Activated naive CD4-positive, alpha-beta T cell treated with anti-CD3 and anti-CD28 coated beads, Interleukin-2, amount 10 ng/mL, durations not matched to agents 7 days and 5 days (primary cell): ENCODE measurements at regions of chr2 and their contacts with region 1.

Region 1: DNA sequence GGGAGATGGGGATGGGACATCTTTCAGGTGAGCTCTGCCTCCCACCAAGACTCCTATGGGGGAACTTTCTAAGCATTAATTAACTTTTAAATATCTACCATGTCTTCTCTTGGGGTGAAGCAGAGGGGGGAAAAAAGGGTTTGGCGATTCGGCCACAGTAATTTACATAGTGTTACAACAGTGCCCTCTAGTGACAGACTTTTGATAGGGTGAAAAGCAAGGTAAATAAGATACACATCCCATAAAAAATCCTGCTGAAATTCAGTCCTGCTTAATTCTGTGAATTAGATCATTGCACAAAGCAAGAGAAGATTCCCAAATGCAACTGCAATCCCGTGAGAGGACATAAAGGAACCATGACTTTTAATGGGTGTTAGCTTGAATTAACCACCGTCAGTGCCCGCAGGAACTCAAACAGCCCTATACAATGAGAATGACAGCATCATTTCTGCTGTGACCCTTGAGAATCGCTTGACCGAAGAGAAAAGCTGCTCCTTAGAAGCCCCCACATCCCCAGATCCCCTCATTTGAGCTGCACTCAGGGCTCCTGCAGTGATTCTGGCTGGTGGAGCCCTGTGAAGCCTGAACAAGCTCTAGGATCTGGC is 32.8 kb downstream of the FAM124B start:
- DNase-seq: no peak
- H3K4me3 Mint-ChIP-seq: no peak overlapping the region
- H3K27ac Mint-ChIP-seq: no peak overlapping the region
- H3K4me1 Mint-ChIP-seq: no peaks in the 10 kb centered on the region
- H3K27me3 Mint-ChIP-seq: peaks cover 12% of the 10 kb centered on the region

Region 2: DNA sequence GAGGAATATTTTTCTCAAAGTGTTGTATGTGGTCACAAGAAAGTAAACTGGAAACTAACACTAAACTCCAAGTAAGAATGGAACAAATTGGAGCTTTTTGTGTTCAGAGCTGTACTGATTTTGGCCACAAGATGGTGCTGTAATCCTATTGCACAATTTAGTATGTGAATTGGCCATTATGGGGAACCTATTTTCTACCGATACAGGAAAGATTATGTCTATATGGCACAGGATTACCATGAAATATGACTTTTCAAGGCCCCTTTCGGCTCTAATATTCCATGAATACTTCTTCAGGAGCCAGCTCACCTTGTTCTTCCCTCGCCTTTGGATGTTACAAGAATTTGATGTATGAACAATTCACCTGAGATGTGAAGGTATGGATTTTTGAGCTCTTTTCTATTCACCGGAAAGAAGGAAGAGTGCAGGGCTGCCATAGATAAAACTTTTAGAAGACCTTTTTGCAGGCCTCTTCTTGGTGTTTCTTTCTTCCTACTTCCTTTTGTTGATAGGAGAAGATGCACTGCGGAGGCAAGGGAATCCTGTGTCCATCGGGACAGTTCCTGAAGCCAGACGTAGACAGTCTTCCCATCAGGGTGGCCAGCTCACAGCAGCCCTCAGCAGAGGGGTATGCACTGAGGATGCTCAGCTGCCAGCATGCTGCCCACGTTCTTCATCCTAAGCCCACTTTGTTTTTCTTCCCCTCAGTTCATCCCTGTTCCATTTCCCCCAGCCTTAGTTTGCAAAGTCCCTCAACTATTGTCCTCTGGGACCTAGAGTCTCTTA is 398.6 kb before region 1 on chr2:
- CTCF ChIA-PET with region 1: interaction called, 30 read pairs
- DNase-seq: peak; percentile 66
- H3K4me3 Mint-ChIP-seq: no peak overlapping the region
- H3K27ac Mint-ChIP-seq: no peak overlapping the region
- H3K4me1 Mint-ChIP-seq: peaks cover 2% of the 10 kb centered on the region
- H3K27me3 Mint-ChIP-seq: no peaks in the 10 kb centered on the region

Region 3: GRCh38 chr2:224328798-224329197 is 40.3 kb before region 1 on chr2:
- CTCF ChIA-PET with region 1: no interaction called
- DNase-seq: no peak
- H3K4me3 Mint-ChIP-seq: no peak overlapping the region
- H3K27ac Mint-ChIP-seq: no peak overlapping the region
- H3K4me1 Mint-ChIP-seq: no peaks in the 10 kb centered on the region
- H3K27me3 Mint-ChIP-seq: peaks cover 8% of the 10 kb centered on the region

Region 4: GRCh38 chr2:224401641-224402342 is 32.7 kb after region 1 on chr2 and contains the start of gene FAM124B:
- CTCF ChIA-PET with region 1: interaction called, 12 read pairs
- DNase-seq: peak; percentile 62
- H3K4me3 Mint-ChIP-seq: peak within 1 kb of the TSS; percentile 72
- H3K27ac Mint-ChIP-seq: peak within 1 kb of the TSS; percentile 81
- H3K4me1 Mint-ChIP-seq: peaks cover 27% of the 10 kb centered on the region
- H3K27me3 Mint-ChIP-seq: peaks cover 10% of the 10 kb centered on the region

Region 5: GRCh38 chr2:224449212-224450147 is 80.3 kb after region 1 on chr2:
- CTCF ChIA-PET with region 1: interaction called, 12 read pairs
- DNase-seq: peak; percentile 41
- H3K4me3 Mint-ChIP-seq: no peak overlapping the region
- H3K27ac Mint-ChIP-seq: no peak overlapping the region
- H3K4me1 Mint-ChIP-seq: no peaks in the 10 kb centered on the region
- H3K27me3 Mint-ChIP-seq: peaks cover 17% of the 10 kb centered on the region

Region 6: GRCh38 chr2:224650815-224651439 is 281.8 kb after region 1 on chr2:
- CTCF ChIA-PET with region 1: interaction called, 35 read pairs
- DNase-seq: no peak
- H3K4me3 Mint-ChIP-seq: no peak overlapping the region
- H3K27ac Mint-ChIP-seq: no peak overlapping the region
- H3K4me1 Mint-ChIP-seq: no peaks in the 10 kb centered on the region
- H3K27me3 Mint-ChIP-seq: peaks cover 4% of the 10 kb centered on the region